Heart right ventricle (tissue), 16 donors: ENCODE measurements at regions of chr1 and their contacts with region 1.

Region 1: GRCh38 chr1:78145105-78145580 is 99.4 kb downstream of the GIPC2 start:
- DNase-seq: peak; percentile 14 to 42
- ATAC-seq: peak in 4 of 8 donors; percentile 53 to 82 (median 66)
- H3K4me3 ChIP-seq: no peak overlapping the region
- H3K27ac ChIP-seq: no peak overlapping the region
- H3K4me1 ChIP-seq: peaks cover 0 to 9% (median 0%) of the 10 kb centered on the region in 9 donors
- H3K27me3 ChIP-seq: no peaks in the 10 kb centered on the region
- CTCF ChIP-seq: peak; percentile 53 to 87 (median 82)

Region 2: DNA sequence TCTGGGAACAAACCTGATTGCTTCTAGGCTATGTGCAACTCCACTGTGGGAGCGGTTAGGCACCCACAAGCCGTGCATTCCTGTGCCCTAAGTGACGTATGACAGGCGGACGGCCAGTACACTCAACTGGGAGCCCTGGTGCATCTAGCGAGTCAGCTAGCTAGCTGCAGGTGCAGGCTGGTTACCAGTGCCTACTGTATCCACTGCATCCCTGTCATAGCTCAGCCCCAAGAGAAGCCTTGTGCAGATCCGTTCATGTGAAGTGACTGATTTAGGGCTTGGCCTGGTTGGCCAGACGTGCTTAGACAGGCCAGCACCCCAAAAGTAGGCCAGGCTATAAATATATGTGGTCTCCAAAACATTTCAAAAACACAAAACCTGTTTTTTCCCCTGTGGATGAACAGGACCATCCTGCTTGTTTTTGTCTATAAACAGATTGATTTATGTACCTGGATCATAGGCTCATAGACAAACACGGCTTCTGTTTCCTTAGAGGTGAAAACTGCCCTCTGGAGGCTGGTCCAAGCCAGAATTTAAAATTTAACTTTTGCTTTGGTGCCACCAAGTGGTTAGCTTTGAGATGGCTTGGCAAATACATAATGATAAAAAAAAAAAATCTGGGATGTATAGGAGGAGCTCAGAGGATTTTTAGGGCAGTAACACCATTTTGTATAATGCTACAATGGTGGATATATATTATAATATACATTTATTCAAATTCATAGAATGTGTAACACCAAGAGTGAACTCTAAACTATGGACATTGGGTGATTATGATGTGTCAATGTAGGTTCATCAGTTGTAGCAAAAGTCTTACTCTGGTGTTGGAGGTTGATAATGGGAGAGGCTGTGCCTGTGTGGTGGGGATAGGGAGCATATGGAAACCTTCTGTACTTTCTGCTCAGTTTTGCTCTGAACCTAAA is 30.8 kb before region 1 on chr1:
- intact Hi-C with region 1: no loop called
- DNase-seq: peak; percentile 32 to 66
- ATAC-seq: peak; percentile 72 to 86 (median 82)
- H3K4me3 ChIP-seq: peak overlapping the region in 1 of 10 donors; percentile 6
- H3K27ac ChIP-seq: peak overlapping the region in 6 of 10 donors; percentile 7 to 51 (median 22)
- H3K4me1 ChIP-seq: peaks cover 0 to 9% (median 5%) of the 10 kb centered on the region in 9 donors
- H3K27me3 ChIP-seq: no peaks in the 10 kb centered on the region
- CTCF ChIP-seq: peak; percentile 71 to 98 (median 88)

Region 3: GRCh38 chr1:78607334-78607927 is 462.3 kb after region 1 on chr1:
- intact Hi-C with region 1: loop called in 6 of 10 experiments (anchors 5 kb)
- DNase-seq: no peak
- ATAC-seq: no peak
- H3K4me3 ChIP-seq: no peak overlapping the region
- H3K27ac ChIP-seq: no peak overlapping the region
- H3K4me1 ChIP-seq: peaks cover 0 to 6% (median 0%) of the 10 kb centered on the region in 9 donors
- H3K27me3 ChIP-seq: peaks cover 0 to 8% (median 4%) of the 10 kb centered on the region in 7 donors
- CTCF ChIP-seq: peak in 8 of 9 donors; percentile 28 to 64 (median 52)

Region 4: DNA sequence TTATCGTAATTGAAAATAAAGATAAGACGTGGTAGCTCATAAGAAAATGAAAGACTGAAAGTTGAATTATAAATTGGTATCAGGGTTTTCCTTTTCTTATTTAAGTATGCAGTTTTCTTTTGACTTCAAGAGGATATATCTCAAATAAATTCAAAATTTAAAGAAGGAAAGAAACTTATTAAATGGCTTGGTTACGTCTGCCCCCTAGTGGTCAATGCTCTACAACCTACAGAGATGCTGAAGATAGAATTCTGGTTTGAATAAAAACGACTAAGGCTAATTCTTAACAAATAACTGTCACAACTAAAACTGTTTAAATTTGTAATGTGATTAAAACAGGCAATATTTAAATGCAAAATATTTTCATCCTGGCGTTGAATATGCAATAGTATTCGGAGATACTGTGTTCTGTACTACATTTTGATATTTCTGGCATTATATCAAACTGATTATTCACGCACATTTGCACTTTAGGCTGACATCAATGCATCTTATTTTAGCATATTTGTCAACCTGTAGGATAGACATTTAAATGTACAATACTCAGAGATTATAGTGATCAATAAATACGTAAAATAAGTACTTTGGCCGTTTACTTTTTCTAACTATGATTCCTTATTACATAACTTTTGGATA is 531.3 kb after region 1 on chr1:
- intact Hi-C with region 1: loop called in 9 of 10 experiments (anchors 2 to 10 kb)
- DNase-seq: peak in 1 of 2 donors; percentile 64
- ATAC-seq: peak in 1 of 8 donors; percentile 64
- H3K4me3 ChIP-seq: no peak overlapping the region
- H3K27ac ChIP-seq: no peak overlapping the region
- H3K4me1 ChIP-seq: no peaks in the 10 kb centered on the region
- H3K27me3 ChIP-seq: no peaks in the 10 kb centered on the region
- CTCF ChIP-seq: peak; percentile 80 to 93 (median 86)

Region 5: GRCh38 chr1:78682496-78682895 is 537.4 kb after region 1 on chr1:
- intact Hi-C with region 1: loop called in 7 of 10 experiments (anchors 2 to 10 kb)
- DNase-seq: no peak
- ATAC-seq: no peak
- H3K4me3 ChIP-seq: no peak overlapping the region
- H3K27ac ChIP-seq: no peak overlapping the region
- H3K4me1 ChIP-seq: no peaks in the 10 kb centered on the region
- H3K27me3 ChIP-seq: no peaks in the 10 kb centered on the region
- CTCF ChIP-seq: no peak